ENCODE measurements at regions of chr18 and their contacts with region 1.

Region 1: DNA sequence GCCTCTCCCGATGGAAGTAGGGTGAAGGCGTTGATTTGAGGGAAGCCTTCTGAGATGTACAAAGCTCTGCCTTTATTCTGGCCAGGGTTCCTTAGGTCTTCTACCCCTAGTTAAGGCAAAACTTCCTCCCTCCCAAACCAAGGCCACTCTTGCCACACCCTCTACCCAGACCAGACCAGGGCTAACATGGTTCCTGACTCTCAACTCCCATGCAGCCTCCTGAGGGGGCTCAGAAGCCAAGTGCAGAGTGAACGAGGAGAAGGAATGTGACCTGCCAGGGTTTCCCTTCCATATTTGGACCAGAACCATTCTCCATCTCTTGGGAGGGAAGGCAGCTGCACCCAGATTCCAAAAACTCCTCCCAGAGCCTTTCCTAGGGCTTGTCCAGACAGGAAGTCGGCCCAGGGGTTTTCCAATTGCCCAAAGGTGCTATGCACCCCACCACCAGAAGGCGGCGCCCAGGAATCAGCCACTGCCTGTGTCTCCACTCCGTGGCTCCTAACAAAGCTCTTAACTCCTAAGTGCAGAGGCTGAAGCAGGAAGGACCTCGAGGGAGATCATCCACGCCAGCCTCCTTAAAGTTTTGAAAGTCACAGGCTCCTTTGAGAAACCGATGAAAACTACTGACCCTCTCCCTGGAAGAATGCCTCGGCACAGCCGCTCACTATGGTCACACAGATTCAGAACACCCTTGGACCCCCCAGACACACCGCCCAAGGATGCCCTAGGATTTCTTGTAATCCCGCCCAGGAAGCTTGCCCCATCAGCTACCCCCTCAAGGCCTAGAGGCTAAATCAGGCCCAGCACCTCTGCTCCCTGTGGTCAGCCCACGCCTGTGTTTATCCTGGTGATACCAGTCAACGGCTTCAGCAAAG is 157.8 kb downstream of the SMAD2 start:
- DNase-seq: peak; percentile 45 to 93 (median 76)
- ATAC-seq: peak; percentile 86 to 98 (median 94)
- H3K4me3 ChIP-seq: no peak overlapping the region
- H3K27ac ChIP-seq: no peak overlapping the region
- H3K4me1 ChIP-seq: no peaks in the 10 kb centered on the region
- H3K27me3 ChIP-seq: no peaks in the 10 kb centered on the region
- CTCF ChIP-seq: peak; percentile 52 to 65 (median 64)

Region 2: GRCh38 chr18:47970664-47971531 is 198.3 kb after region 1 on chr18:
- intact Hi-C with region 1: no loop called
- DNase-seq: no peak
- ATAC-seq: no peak
- H3K4me3 ChIP-seq: no peak overlapping the region
- H3K27ac ChIP-seq: no peak overlapping the region
- H3K4me1 ChIP-seq: peaks cover 0 to 6% (median 0%) of the 10 kb centered on the region in 3 donors
- H3K27me3 ChIP-seq: no peaks in the 10 kb centered on the region
- CTCF ChIP-seq: no peak

Region 3: GRCh38 chr18:48022531-48023329 is 250.1 kb after region 1 on chr18:
- intact Hi-C with region 1: loop called in 2 of 3 experiments (anchors 5 kb)
- DNase-seq: no peak
- ATAC-seq: peak; percentile 73 to 94 (median 86)
- H3K4me3 ChIP-seq: no peak overlapping the region
- H3K27ac ChIP-seq: no peak overlapping the region
- H3K4me1 ChIP-seq: no peaks in the 10 kb centered on the region
- H3K27me3 ChIP-seq: no peaks in the 10 kb centered on the region
- CTCF ChIP-seq: peak; percentile 17 to 45 (median 31)